BJ (cell line): ENCODE measurements at regions of chr15 and their contacts with region 1.

Region 1: DNA sequence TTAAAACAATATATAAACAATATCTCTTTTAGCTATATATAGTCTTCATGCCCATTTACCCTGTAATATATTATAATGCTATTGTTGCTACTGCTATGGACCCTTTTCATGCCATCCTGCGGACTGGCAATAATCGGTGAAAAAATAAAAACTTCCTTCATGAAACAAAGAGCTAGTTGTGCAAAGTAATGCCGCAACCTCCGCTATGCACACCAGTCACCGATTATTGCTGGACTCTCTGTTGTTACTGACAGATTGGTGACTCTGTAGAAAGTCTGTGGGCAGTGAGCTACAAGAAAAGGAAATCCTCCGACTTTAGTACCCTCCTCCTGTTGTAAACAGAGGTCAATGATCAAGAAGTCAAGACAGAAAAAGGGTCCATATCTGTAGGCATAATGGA is 17.9 kb upstream of the ICE2 start:
- DNase-seq: no peak
- H3K4me3 ChIP-seq: no peak overlapping the region
- H3K27me3 ChIP-seq: no peaks in the 10 kb centered on the region
- CTCF ChIP-seq: no peak

Region 2: GRCh38 chr15:60507596-60508424 is 11.0 kb after region 1 on chr15:
- CTCF ChIA-PET with region 1: interaction called, 13 read pairs
- POLR2A ChIA-PET with region 1: interaction called, 6 read pairs
- DNase-seq: peak; percentile 22
- H3K4me3 ChIP-seq: no peak overlapping the region
- H3K27me3 ChIP-seq: no peaks in the 10 kb centered on the region
- CTCF ChIP-seq: peak; percentile 91